GM10248 (cell line): ENCODE measurements at regions of chr14 and their contacts with region 1.

Region 1: DNA sequence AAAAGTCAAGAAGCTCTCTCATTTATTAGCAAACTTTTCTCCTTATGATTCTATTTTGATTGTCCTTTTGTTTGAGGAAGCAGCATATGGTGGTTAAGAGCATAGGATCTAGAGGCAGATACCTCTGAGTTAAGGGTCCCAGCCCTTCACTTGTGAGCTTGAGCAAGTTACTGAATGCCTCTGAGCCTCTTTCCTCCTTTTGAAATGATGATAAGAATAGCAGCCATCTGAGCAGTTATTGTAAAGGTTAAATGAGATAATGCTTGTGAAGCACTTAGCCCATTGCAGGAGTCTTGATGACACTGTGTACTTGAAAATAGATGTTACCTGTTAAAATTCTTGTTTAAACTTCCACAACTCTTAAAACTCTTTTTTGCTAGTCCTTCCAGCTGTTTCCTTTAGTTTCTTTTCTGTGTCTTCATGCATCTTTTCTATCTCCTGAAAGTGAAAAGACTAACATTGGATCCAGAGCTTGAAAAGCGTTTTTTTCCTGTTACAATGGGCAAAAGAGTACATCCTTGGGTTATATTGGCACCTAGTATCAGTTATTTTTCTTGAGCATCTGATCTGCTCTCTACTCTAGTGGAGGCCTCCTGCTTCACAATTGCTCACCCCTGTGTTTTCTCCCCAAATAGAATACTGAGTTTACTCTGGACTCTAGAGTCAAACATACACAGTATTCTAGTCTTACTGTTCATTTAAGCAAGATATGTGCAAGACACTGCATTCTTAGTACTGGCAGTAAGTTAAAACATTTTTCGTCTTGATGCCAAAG is 3.1 kb downstream of the HIF1A start:
- DNase-seq: no peak
- CTCF ChIP-seq: no peak

Region 2: DNA sequence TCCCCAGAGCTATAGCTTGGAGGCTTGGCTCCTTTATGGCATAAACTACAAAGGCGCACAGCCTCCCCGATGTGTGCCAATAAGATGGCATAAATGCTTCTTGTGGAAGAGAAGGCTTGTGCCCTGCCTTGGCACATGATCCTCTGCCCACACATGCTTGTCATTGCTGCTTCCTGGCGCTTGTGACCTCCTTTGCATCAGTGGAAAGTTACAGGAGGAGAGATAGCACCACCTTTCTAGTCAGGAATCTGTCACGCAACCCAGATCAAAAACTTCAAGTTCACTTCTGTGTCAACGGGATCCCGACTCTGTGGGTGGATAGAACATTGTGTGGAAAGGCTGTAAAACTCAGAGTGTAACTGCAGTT is 186.9 kb before region 1 on chr14:
- CTCF ChIA-PET with region 1: no interaction called
- POLR2A ChIA-PET with region 1: no interaction called
- DNase-seq: no peak
- CTCF ChIP-seq: no peak

Region 3: DNA sequence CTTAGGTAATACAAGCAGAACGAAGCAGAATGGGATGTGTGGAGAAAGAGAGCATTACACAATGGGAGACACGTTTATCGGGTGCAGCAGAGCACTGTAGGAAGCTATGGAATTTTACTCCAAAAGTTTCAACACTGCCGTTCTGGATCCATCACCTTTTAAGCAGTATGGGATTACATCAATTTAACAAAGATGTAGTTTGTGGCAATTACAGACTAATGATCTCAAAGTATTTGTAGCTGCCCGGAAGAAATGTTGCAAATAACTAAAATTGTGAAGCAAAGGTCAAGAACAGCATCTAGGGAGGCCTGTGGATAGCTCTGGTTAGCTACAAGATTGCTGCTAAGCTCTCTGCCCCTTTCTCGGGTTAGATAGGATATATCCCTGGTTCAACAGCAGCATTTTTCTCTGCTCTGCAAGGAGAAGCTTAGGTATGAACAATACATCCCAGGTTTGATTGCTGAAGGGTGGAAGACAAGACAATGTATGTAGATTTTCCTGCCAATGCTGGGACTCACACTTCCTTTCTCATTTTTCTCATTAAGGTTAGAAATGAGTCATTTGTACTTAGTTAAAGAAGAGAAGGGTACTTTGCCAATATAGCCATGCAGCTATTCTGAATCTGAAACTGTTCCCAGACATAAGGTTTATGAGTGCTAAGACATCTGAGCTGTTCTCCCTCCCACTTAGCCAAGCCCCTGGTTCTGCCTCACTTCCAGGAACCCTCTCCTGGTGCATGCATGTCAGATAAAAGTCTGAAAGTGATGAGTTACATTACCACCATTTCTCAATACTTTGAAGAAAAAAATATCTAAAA is 78.1 kb before region 1 on chr14:
- CTCF ChIA-PET with region 1: no interaction called
- POLR2A ChIA-PET with region 1: no interaction called
- DNase-seq: no peak
- CTCF ChIP-seq: no peak

Region 4: GRCh38 chr14:61719344-61720293 is 21.2 kb after region 1 on chr14:
- CTCF ChIA-PET with region 1: interaction called, 16 read pairs
- POLR2A ChIA-PET with region 1: interaction called, 3 read pairs
- DNase-seq: no peak
- CTCF ChIP-seq: no peak

Region 5: DNA sequence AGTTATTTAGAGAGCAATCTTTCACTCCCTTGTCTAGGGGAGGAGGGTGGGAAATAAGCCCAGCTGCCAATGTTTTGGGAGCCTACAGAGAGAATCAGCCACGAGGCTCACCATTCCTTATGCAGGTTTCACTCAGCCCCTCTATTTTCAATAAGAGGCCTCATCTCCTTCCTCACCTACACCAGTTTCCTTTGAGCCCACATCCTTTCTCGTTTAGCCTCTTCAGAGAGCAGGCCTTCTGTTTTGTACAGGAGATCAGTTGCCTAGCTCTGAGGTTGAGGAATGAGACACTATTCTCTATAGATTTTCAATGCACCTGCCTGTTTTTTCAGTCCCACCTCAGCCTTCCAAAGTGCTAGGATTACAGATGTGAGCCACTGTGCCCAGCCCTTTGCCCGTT is 81.7 kb after region 1 on chr14:
- CTCF ChIA-PET with region 1: no interaction called
- POLR2A ChIA-PET with region 1: no interaction called
- DNase-seq: peak; percentile 35
- CTCF ChIP-seq: no peak